ENCODE measurements at regions of chr12 and their contacts with region 1.

Region 1: GRCh38 chr12:57058454-57058853 is 8.5 kb upstream of the MYO1A start:
- DNase-seq: peak; percentile 35
- ATAC-seq: peak; percentile 66
- H3K4me3 ChIP-seq: peak overlapping the region in 1 of 5 experiments; percentile 13
- H3K4me3 Mint-ChIP-seq: peak overlapping the region; percentile 70
- H3K27ac ChIP-seq: peak overlapping the region; percentile 22 to 60
- H3K27ac Mint-ChIP-seq: peak overlapping the region; percentile 77
- H3K4me1 ChIP-seq: peaks cover 30 to 47% of the 10 kb centered on the region in 2 donors
- H3K4me1 Mint-ChIP-seq: peaks cover 57% of the 10 kb centered on the region
- H3K27me3 ChIP-seq: no peaks in the 10 kb centered on the region
- H3K27me3 Mint-ChIP-seq: no peaks in the 10 kb centered on the region
- CTCF ChIP-seq: no peak

Region 2: DNA sequence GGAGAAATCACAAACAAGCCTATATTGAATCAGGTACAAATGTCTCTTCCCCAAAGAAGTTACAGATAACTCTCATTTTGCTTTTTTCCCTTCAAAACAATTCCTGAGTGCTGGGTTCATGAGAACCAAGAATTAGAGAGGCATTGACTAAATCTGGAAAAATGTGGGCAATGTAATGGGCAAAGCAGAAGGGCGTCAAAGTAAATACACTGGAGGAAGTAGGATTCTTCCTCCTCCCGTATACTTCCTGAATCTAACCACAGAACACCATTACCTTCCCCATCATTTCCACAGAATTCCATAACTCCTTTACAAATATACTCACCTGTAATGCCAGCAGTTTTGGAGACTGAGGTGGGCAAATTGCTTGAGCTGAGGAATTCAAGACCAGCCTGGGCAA is 539.9 kb before region 1 on chr12:
- CTCF ChIA-PET with region 1: no interaction called
- POLR2A ChIA-PET with region 1: no interaction called
- intact Hi-C with region 1: no loop called
- DNase-seq: no peak
- ATAC-seq: no peak
- H3K4me3 ChIP-seq: no peak overlapping the region
- H3K4me3 Mint-ChIP-seq: no peak overlapping the region
- H3K27ac ChIP-seq: no peak overlapping the region
- H3K27ac Mint-ChIP-seq: no peak overlapping the region
- H3K4me1 ChIP-seq: peaks cover 12 to 22% of the 10 kb centered on the region in 2 donors
- H3K4me1 Mint-ChIP-seq: peaks cover 23% of the 10 kb centered on the region
- H3K27me3 ChIP-seq: no peaks in the 10 kb centered on the region
- H3K27me3 Mint-ChIP-seq: peaks cover 7% of the 10 kb centered on the region
- CTCF ChIP-seq: no peak

Region 3: DNA sequence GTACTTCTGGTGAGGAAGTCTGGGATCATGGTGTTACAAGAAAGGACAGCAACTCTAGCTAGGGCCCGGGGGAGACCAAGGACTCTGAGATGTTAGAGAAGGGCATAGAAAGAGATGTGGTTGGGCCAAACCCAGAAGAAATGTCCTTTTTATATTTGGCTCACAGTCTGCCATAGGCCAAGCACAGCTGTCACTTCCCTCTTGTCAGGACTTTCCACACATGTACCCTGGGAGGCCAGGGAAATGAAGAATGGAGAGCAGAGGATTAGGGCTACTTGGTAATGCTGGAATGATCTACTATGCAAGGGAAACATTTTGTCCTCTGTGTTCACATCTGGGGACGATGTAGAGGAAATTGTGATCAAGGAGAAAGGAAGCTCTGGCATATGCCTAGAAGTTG is 17.7 kb before region 1 on chr12:
- CTCF ChIA-PET with region 1: interaction called, 70 read pairs
- POLR2A ChIA-PET with region 1: no interaction called
- intact Hi-C with region 1: no loop called
- DNase-seq: no peak
- ATAC-seq: no peak
- H3K4me3 ChIP-seq: no peak overlapping the region
- H3K4me3 Mint-ChIP-seq: no peak overlapping the region
- H3K27ac ChIP-seq: no peak overlapping the region
- H3K27ac Mint-ChIP-seq: no peak overlapping the region
- H3K4me1 ChIP-seq: peaks cover 0 to 4% of the 10 kb centered on the region in 2 donors
- H3K4me1 Mint-ChIP-seq: peaks cover 3% of the 10 kb centered on the region
- H3K27me3 ChIP-seq: no peaks in the 10 kb centered on the region
- H3K27me3 Mint-ChIP-seq: no peaks in the 10 kb centered on the region
- CTCF ChIP-seq: no peak